Gastrocnemius medialis (tissue), 4 donors: ENCODE measurements at regions of chr2 and their contacts with region 1.

Region 1: DNA sequence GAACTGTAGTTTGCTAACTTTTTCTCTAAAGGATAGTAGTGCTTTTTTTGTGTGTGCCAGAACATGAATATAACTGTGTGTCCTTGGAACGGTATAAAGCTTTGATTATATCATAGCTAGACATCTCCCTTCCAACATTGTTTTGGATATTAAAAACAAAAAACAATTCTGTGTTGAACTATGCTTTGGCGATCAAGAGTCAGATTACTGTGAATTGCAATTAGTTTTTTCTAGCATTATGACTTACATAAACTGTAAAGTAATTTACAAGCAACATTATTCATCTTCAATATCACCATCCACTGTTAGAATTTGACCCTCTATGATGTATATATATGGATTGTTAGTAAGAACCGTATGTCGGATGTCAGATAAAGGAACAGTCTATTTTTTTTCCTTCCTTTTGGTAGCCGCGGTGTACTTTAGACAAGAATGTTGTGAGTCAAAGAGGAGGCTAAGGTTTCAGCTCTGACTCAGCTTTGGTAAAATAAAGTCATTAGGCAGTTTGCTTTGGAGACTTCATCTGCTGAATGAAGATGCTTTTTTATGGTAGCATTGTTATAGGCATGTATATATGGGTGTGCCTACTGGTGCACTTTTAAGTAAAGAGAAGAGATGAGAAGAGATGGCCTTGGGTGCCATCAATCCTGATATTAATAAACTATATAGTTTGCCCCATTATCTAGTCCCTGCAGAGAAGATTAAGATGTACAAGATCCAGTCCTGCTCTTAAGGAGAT is 76.4 kb downstream of the LTBP1 start:
- DNase-seq: no peak
- ATAC-seq: peak; percentile 80 to 91
- H3K4me3 ChIP-seq: peak overlapping the region in 1 of 4 donors; percentile 26
- H3K27ac ChIP-seq: peak overlapping the region; percentile 63 to 84 (median 70)
- H3K4me1 ChIP-seq: peaks cover 31 to 32% of the 10 kb centered on the region in 2 donors
- H3K27me3 ChIP-seq: no peaks in the 10 kb centered on the region
- CTCF ChIP-seq: no peak
- POLR2A ChIP-seq: no peak

Region 2: GRCh38 chr2:32783469-32783868 is 239.7 kb before region 1 on chr2:
- in situ Hi-C with region 1: loop called in 1 of 4 experiments (anchors 10 kb)
- intact Hi-C with region 1: no loop called
- DNase-seq: no peak
- ATAC-seq: no peak
- H3K4me3 ChIP-seq: no peak overlapping the region
- H3K27ac ChIP-seq: peak overlapping the region in 3 of 4 donors; percentile 7 to 46 (median 24)
- H3K4me1 ChIP-seq: peaks cover 22 to 29% of the 10 kb centered on the region in 2 donors
- H3K27me3 ChIP-seq: no peaks in the 10 kb centered on the region
- CTCF ChIP-seq: no peak
- POLR2A ChIP-seq: no peak

Region 3: DNA sequence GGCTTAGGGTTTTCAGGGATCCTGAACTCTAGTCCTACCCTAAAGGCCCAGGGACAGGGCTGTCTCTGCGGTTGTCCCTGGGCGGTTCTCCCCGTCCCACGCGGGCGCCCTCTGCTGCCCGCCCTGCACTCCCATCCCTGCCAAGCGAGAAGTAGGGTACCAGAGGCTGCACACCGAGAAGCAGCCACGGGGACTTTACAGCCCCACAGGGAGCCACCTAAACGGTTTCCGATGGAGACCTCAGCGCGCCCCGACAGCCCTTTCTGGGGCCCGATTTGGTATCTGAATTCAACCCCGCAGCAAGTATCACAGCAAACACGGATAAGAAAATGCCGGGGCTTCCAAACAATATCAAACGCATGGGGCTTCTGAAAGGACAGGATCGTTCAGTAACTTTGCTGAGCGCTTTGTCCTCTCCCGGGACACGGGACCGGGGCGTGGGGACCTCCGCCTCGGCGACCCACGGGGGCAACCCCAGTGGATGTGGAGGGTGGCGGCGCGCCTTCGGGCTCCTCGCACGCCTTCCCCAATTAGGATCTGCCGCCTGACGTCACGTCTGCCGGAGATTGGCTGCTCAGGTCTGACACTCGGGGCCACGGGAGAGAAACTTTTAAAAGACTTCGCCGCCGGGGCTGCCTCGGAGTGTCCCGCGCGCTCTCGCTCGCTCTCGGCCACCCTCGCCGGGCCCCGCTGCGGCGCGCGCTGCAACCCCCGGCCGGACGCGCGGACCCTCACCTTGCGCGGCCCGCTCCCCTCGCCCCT is 76.7 kb before region 1 on chr2 and contains the start of gene LTBP1:
- in situ Hi-C with region 1: loop called in 1 of 4 experiments (anchors 5 kb)
- intact Hi-C with region 1: loop called (anchors 2 kb)
- DNase-seq: peak; percentile 54 to 61
- ATAC-seq: peak; percentile 82 to 84
- H3K4me3 ChIP-seq: peak within 1 kb of the TSS; percentile 71 to 83 (median 74)
- H3K27ac ChIP-seq: peak within 1 kb of the TSS; percentile 75 to 79 (median 78)
- H3K4me1 ChIP-seq: no peaks in the 10 kb centered on the region
- H3K27me3 ChIP-seq: no peaks in the 10 kb centered on the region
- CTCF ChIP-seq: peak; percentile 48 to 85 (median 65)
- POLR2A ChIP-seq: peak; percentile 62 to 74
- total RNA-seq, gene LTBP1: 8.0 to 42.8 (median 18.4) TPM